Heart left ventricle (tissue), 16 donors: ENCODE measurements at regions of chr9 and their contacts with region 1.

Region 1: GRCh38 chr9:33852216-33852826 is 35.4 kb downstream of the UBE2R2 start:
- DNase-seq: peak in 4 of 5 donors; percentile 59 to 83 (median 69)
- ATAC-seq: peak; percentile 62 to 86 (median 82)
- H3K4me3 ChIP-seq: no peak overlapping the region
- H3K27ac ChIP-seq: peak overlapping the region in 8 of 12 donors; percentile 6 to 59 (median 34)
- H3K4me1 ChIP-seq: peaks cover 9 to 62% (median 41%) of the 10 kb centered on the region in 12 donors
- H3K27me3 ChIP-seq: no peaks in the 10 kb centered on the region
- CTCF ChIP-seq: peak; percentile 49 to 78 (median 68)
- POLR2A ChIP-seq: no peak

Region 2: DNA sequence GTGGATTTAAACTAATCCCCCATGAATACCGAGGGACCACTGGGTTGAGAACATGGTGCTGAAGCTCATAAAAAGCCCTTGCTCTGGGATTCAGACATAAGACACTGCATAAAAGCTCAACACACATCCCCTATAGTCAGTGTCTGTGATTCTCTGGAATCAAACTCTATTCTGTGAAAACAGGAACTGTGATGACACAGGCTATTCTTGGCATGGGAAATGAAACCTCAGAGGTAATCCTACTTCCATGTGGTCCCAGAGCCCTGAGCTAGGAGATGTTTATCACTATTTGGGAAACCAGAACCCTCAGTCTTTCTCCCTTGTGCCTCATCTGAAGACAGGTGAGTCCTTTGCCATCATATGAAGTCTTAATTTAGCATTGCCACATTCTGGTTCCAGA is 192.4 kb before region 1 on chr9:
- intact Hi-C with region 1: no loop called
- DNase-seq: no peak
- ATAC-seq: no peak
- H3K4me3 ChIP-seq: no peak overlapping the region
- H3K27ac ChIP-seq: no peak overlapping the region
- H3K4me1 ChIP-seq: no peaks in the 10 kb centered on the region
- H3K27me3 ChIP-seq: peaks cover 0 to 7% (median 0%) of the 10 kb centered on the region in 9 donors
- CTCF ChIP-seq: no peak
- POLR2A ChIP-seq: no peak

Region 3: DNA sequence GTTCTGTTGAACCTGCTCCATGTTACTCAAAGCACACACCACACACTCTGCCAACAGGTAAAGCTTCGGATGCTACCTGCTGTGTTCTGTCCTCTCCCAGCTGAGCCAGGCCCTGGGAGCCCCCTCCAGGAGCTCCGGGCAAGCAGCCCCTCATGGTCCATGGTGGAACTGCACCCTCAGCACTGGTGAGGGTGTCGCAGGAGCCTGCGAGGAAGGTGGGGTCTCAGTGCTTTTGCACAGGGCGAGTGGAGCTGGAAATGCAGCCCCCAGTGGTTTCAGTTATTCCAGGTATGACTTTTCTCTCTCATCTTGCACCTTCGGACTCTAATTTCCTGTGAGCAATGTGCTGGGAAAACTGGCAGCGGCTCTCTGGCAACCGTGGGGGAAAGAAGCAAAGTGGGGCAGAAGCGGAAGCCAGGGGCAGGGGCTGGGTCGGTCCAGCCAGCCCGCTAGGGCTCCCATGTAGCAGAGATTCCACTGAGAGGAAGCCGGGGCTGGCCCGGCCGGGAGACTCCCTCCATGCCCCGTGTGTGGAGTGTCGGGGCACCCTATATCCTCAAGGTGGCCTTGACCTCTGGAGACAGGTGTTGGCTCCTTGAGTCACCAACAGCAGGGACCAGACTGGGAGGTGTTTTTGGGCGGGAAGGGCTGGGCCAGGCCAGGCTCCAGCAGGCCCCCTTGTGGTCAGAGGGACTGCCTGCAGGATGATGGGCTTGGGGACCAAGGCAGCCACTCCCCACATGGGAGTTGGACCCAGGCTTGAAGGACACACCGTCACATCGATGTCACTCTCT is 132.5 kb before region 1 on chr9:
- intact Hi-C with region 1: no loop called
- DNase-seq: peak in 2 of 5 donors; percentile 31 to 62
- ATAC-seq: peak in 3 of 4 donors; percentile 55 to 60 (median 56)
- H3K4me3 ChIP-seq: no peak overlapping the region
- H3K27ac ChIP-seq: no peak overlapping the region
- H3K4me1 ChIP-seq: peaks cover 0 to 15% (median 0%) of the 10 kb centered on the region in 12 donors
- H3K27me3 ChIP-seq: peaks cover 0 to 9% (median 0%) of the 10 kb centered on the region in 9 donors
- CTCF ChIP-seq: peak; percentile 17 to 54 (median 44)
- POLR2A ChIP-seq: no peak

Region 4: DNA sequence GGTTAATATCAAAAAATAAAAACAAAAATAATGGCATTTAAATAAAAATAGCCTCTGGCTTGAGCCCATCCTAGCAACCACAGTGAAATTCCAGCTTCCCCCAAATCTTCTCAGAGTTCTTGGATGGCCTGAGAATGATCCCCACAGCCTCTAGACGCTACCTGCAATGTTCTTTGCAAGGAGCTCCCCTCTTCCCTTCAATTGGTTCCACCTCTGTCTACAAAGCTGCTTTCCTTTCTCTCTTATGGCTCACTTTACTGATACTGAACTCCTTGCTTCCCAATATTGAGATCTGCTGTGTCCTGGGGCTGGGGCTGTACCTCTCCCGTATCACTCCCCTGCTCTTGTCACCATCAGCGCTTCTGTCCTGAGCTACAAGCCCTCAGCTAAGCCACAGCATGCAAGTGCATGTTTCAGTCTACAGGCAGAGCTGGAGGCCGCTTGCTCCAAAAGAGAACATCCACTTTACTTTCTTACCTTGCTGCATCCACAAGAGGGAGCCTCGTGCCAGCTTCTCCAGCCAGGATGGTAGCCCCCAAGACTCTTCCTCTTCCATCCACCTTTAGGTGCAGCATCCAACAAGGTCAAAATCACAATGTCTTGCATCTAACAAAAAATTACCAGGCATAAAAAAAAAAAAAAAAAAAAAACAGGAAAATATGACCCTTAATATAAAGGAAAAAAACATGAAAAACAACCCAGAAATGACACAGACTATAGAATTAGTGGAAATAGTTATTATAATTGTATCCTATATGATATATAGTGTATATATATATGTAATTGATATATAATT is 114.3 kb before region 1 on chr9:
- intact Hi-C with region 1: loop called in 1 of 10 experiments (anchors 5 kb)
- DNase-seq: peak in 2 of 5 donors; percentile 25 to 44
- ATAC-seq: peak in 3 of 4 donors; percentile 55 to 78 (median 75)
- H3K4me3 ChIP-seq: no peak overlapping the region
- H3K27ac ChIP-seq: no peak overlapping the region
- H3K4me1 ChIP-seq: no peaks in the 10 kb centered on the region
- H3K27me3 ChIP-seq: peaks cover 0 to 2% (median 0%) of the 10 kb centered on the region in 9 donors
- CTCF ChIP-seq: peak in 11 of 12 donors; percentile 23 to 57 (median 40)
- POLR2A ChIP-seq: no peak